ENCODE measurements at regions of chr10 and their contacts with region 1.

Region 1: GRCh38 chr10:99435986-99436638 is 5.7 kb upstream of the GOT1 start:
- DNase-seq: peak; percentile 36
- H3K4me3 ChIP-seq: no peak overlapping the region
- H3K27ac ChIP-seq: no peak overlapping the region
- H3K4me1 ChIP-seq: peaks cover 0 to 4% of the 10 kb centered on the region in 2 experiments; a peak in 2 of 4 replicates
- H3K27me3 ChIP-seq: no peaks in the 10 kb centered on the region
- CTCF ChIP-seq: peak; percentile 78
- EP300 ChIP-seq: no peak
- RAD21 ChIP-seq: peak; percentile 74

Region 2: GRCh38 chr10:99395750-99396445 is 40.2 kb before region 1 on chr10:
- CTCF ChIA-PET with region 1: interaction called, 13 read pairs
- POLR2A ChIA-PET with region 1: no interaction called
- DNase-seq: no peak
- H3K4me3 ChIP-seq: no peak overlapping the region
- H3K27ac ChIP-seq: peak overlapping the region; percentile 67 to 77; a peak in 3 of 4 replicates
- H3K4me1 ChIP-seq: peaks cover 0 to 12% of the 10 kb centered on the region in 2 experiments; a peak in 2 of 4 replicates
- H3K27me3 ChIP-seq: no peaks in the 10 kb centered on the region
- CTCF ChIP-seq: no peak
- EP300 ChIP-seq: no peak
- RAD21 ChIP-seq: no peak

Region 3: DNA sequence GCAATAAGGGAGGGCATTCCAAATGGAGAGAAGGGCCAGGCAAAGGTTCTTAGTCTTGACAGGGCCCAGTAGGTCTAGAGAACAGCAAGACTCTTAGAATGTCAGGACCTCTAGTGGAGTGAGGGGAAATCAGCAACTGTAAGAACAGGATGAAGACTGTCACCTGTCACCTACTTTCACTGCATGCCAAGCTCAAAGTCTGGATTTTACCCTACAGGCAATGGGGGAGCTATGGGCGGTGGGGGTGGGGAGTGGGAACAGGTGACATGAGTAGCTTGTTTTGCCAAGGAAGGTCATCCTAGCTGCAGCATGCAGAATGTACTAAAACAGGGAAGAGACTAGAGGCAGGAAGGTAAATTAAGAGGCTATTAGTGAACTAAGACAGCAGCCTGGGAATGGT is 24.0 kb before region 1 on chr10:
- CTCF ChIA-PET with region 1: no interaction called
- POLR2A ChIA-PET with region 1: no interaction called
- DNase-seq: no peak
- H3K4me3 ChIP-seq: no peak overlapping the region
- H3K27ac ChIP-seq: no peak overlapping the region
- H3K4me1 ChIP-seq: no peaks in the 10 kb centered on the region
- H3K27me3 ChIP-seq: no peaks in the 10 kb centered on the region
- CTCF ChIP-seq: no peak
- EP300 ChIP-seq: no peak
- RAD21 ChIP-seq: no peak

Region 4: GRCh38 chr10:99457813-99458212 is 21.7 kb after region 1 on chr10:
- CTCF ChIA-PET with region 1: interaction called, 40 read pairs
- POLR2A ChIA-PET with region 1: no interaction called
- DNase-seq: no peak
- H3K4me3 ChIP-seq: no peak overlapping the region
- H3K27ac ChIP-seq: no peak overlapping the region
- H3K4me1 ChIP-seq: no peaks in the 10 kb centered on the region
- H3K27me3 ChIP-seq: peaks cover 32% of the 10 kb centered on the region
- CTCF ChIP-seq: no peak
- EP300 ChIP-seq: no peak
- RAD21 ChIP-seq: no peak

Region 5: DNA sequence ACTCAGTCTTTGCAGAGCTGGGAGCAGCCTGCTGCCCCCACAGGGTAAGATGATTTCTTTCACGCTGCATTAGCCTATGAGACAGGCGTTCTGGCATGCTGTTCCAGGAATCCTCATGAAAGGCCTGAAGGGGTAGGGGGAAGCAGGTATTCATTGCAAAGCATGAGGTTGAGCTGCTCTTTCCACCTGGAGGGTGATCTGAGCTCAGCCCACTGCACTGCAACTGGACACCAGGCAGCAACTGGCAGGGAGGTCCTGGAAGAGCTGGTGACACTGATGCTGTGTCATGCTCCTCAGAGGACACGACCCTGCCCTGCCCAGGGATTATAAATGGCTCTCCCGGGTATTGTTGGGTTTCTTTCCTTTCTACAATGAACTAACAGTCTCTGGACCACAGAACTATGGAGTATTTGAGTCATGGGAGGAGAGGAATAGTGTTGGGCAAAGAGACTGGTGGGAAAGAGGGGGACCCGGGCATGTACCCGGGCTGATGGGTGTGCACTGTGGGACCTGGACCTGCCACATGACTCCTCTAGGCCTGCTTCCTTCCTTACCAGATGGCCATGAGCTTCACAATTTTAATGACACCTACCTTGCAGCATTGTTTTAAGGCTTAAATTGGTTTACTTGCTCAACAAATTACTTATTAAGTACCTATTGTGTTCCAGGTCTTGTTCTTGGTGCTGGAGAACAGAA is 159.8 kb after region 1 on chr10:
- CTCF ChIA-PET with region 1: interaction called, 14 read pairs
- POLR2A ChIA-PET with region 1: no interaction called
- DNase-seq: no peak
- H3K4me3 ChIP-seq: no peak overlapping the region
- H3K27ac ChIP-seq: no peak overlapping the region
- H3K4me1 ChIP-seq: no peaks in the 10 kb centered on the region
- H3K27me3 ChIP-seq: peaks cover 22% of the 10 kb centered on the region; the same call in 1 of the 2 replicates
- CTCF ChIP-seq: no peak
- EP300 ChIP-seq: no peak
- RAD21 ChIP-seq: no peak

Region 6: GRCh38 chr10:99620713-99621453 is 184.8 kb after region 1 on chr10:
- CTCF ChIA-PET with region 1: interaction called, 46 read pairs
- POLR2A ChIA-PET with region 1: interaction called, 6 read pairs
- DNase-seq: peak; percentile 90
- H3K4me3 ChIP-seq: peak overlapping the region; percentile 75 to 93
- H3K27ac ChIP-seq: peak overlapping the region; percentile 97 to 98
- H3K4me1 ChIP-seq: peaks cover 5 to 17% of the 10 kb centered on the region in 2 experiments; a peak in 3 of 4 replicates
- H3K27me3 ChIP-seq: no peaks in the 10 kb centered on the region
- CTCF ChIP-seq: no peak
- EP300 ChIP-seq: no peak
- RAD21 ChIP-seq: no peak

Measured in SK-N-SH (cell line).